Activated CD4-positive, alpha-beta T cell treated with anti-CD3 and anti-CD28 coated beads, Interleukin-2, amount 10 ng/mL, durations not matched to agents 24 days and 14 days (primary cell): ENCODE measurements at regions of chr14 and their contacts with region 1.

Region 1: GRCh38 chr14:23631702-23632460 is 4.3 kb upstream of the DHRS2 start:
- DNase-seq: peak; percentile 91
- H3K4me3 Mint-ChIP-seq: peak overlapping the region; percentile 61
- H3K27ac Mint-ChIP-seq: no peak overlapping the region
- H3K4me1 Mint-ChIP-seq: peaks cover 20% of the 10 kb centered on the region
- H3K27me3 Mint-ChIP-seq: peaks cover 8% of the 10 kb centered on the region

Region 2: DNA sequence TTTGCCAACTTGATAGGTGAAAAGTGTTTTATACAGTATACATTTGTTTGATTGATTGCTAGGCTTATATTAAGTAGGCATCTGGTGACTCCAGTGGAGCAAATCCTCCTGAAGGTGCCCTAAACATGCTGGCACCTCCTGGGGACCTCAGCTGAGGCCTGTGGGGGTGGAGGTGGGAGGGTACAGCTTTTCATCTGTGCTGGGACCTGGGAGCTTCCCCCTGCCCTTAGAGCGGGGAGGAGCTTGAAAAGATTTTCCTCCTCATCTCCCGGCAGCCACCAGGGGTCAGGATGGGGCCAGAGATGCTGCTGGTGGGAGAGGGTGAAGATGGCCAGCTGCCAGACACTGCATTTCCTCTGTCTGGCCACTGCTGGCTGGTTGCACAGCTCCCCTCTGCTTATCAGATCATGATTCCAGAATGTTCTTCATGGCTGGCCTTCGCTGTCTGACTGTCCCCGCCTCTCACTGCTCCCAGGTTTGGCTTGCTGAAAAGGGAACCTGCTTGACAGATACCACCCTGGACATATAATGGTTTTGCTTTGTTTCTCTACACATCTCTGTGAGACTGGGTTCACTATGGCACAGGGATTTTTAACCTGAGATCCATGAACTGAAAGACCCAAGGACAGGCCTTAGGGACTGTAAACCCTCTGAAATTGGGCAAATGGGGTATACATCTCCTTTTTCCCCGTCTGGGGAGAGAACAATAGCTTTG is 42.8 kb before region 1 on chr14:
- intact Hi-C with region 1: loop called (anchors 1 kb)
- DNase-seq: peak; percentile 92
- H3K4me3 Mint-ChIP-seq: no peak overlapping the region
- H3K27ac Mint-ChIP-seq: no peak overlapping the region
- H3K4me1 Mint-ChIP-seq: peaks cover 6% of the 10 kb centered on the region
- H3K27me3 Mint-ChIP-seq: peaks cover 21% of the 10 kb centered on the region

Region 3: GRCh38 chr14:23613242-23614070 is 18.4 kb before region 1 on chr14:
- intact Hi-C with region 1: no loop called
- DNase-seq: no peak
- H3K4me3 Mint-ChIP-seq: no peak overlapping the region
- H3K27ac Mint-ChIP-seq: no peak overlapping the region
- H3K4me1 Mint-ChIP-seq: peaks cover 19% of the 10 kb centered on the region
- H3K27me3 Mint-ChIP-seq: no peaks in the 10 kb centered on the region

Region 4: GRCh38 chr14:23681337-23681736 is 49.5 kb after region 1 on chr14:
- intact Hi-C with region 1: no loop called
- DNase-seq: no peak
- H3K4me3 Mint-ChIP-seq: no peak overlapping the region
- H3K27ac Mint-ChIP-seq: no peak overlapping the region
- H3K4me1 Mint-ChIP-seq: no peaks in the 10 kb centered on the region
- H3K27me3 Mint-ChIP-seq: peaks cover 23% of the 10 kb centered on the region

Region 5: GRCh38 chr14:23694085-23694975 is 62.4 kb after region 1 on chr14:
- intact Hi-C with region 1: no loop called
- DNase-seq: no peak
- H3K4me3 Mint-ChIP-seq: no peak overlapping the region
- H3K27ac Mint-ChIP-seq: no peak overlapping the region
- H3K4me1 Mint-ChIP-seq: no peaks in the 10 kb centered on the region
- H3K27me3 Mint-ChIP-seq: peaks cover 2% of the 10 kb centered on the region

Region 6: GRCh38 chr14:23929822-23930294 is 298.0 kb after region 1 on chr14:
- intact Hi-C with region 1: loop called (anchors 1 kb)
- DNase-seq: peak; percentile 94
- H3K4me3 Mint-ChIP-seq: no peak overlapping the region
- H3K27ac Mint-ChIP-seq: no peak overlapping the region
- H3K4me1 Mint-ChIP-seq: no peaks in the 10 kb centered on the region
- H3K27me3 Mint-ChIP-seq: peaks cover 3% of the 10 kb centered on the region

Region 7: GRCh38 chr14:23953464-23954278 is 321.8 kb after region 1 on chr14 and contains the start of gene DHRS4:
- intact Hi-C with region 1: loop called (anchors 1 kb)
- DNase-seq: peak; percentile 93
- H3K4me3 Mint-ChIP-seq: peak within 1 kb of the TSS; percentile 99
- H3K27ac Mint-ChIP-seq: peak within 1 kb of the TSS; percentile 90
- H3K4me1 Mint-ChIP-seq: peaks cover 15% of the 10 kb centered on the region
- H3K27me3 Mint-ChIP-seq: no peaks in the 10 kb centered on the region
- total RNA-seq, gene DHRS4: 17.6 and 18.2 TPM in 2 replicates